MCF 10A (cell line): ENCODE measurements at regions of chr4 and their contacts with region 1.

Region 1: GRCh38 chr4:9704551-9705332 is 76.7 kb upstream of the DRD5 start:
- DNase-seq: peak; percentile 16
- H3K4me3 Mint-ChIP-seq: no peak overlapping the region
- H3K27ac Mint-ChIP-seq: no peak overlapping the region
- H3K4me1 Mint-ChIP-seq: peaks cover 12% of the 10 kb centered on the region
- H3K27me3 Mint-ChIP-seq: no peaks in the 10 kb centered on the region
- CTCF ChIP-seq: no peak

Region 2: GRCh38 chr4:9384126-9384525 is 320.6 kb before region 1 on chr4:
- CTCF ChIA-PET with region 1: no interaction called
- POLR2A ChIA-PET with region 1: no interaction called
- intact Hi-C with region 1: no loop called
- DNase-seq: peak; percentile 10
- H3K4me3 Mint-ChIP-seq: no peak overlapping the region
- H3K27ac Mint-ChIP-seq: no peak overlapping the region
- H3K4me1 Mint-ChIP-seq: no peaks in the 10 kb centered on the region
- H3K27me3 Mint-ChIP-seq: no peaks in the 10 kb centered on the region
- CTCF ChIP-seq: no peak

Region 3: GRCh38 chr4:9691238-9692065 is 13.3 kb before region 1 on chr4:
- CTCF ChIA-PET with region 1: interaction called, 13 read pairs
- POLR2A ChIA-PET with region 1: no interaction called
- intact Hi-C with region 1: no loop called
- DNase-seq: peak; percentile 93
- H3K4me3 Mint-ChIP-seq: peak overlapping the region; percentile 79
- H3K27ac Mint-ChIP-seq: peak overlapping the region; percentile 81
- H3K4me1 Mint-ChIP-seq: no peaks in the 10 kb centered on the region
- H3K27me3 Mint-ChIP-seq: no peaks in the 10 kb centered on the region
- CTCF ChIP-seq: no peak

Region 4: DNA sequence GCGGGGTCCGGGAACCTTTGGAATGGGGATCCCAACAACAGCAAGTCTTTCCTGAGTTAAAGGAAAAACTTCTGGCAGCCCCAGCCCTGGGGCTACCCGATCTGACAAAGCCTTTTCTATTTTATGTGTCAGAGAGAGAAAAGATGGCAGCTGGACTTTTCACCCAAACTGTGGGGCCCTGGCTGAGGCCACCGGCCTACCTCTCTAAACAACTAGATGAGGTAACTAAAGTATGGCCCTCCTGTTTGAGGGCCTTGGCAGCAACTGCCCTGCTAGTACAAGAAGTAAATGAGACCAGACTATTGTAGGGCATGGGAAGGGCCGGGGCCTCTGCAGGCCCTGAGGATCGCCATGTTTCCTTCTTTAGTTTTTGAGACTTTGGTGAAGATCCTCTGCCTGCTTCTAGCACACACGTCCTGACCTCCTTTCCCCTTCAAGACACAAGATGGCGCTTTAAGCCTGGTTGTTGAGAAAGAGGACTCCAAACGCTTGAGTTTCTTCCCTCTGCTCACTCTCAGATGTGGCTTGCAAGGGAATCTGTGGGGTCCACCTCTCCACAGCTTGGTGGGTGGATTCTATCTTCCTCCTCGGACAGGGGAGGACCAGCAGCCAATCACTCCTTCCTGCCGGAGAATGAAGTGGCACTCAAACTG is 58.2 kb after region 1 on chr4:
- CTCF ChIA-PET with region 1: no interaction called
- POLR2A ChIA-PET with region 1: no interaction called
- intact Hi-C with region 1: loop called (anchors 1 kb)
- DNase-seq: peak; percentile 81
- H3K4me3 Mint-ChIP-seq: no peak overlapping the region
- H3K27ac Mint-ChIP-seq: no peak overlapping the region
- H3K4me1 Mint-ChIP-seq: peaks cover 5% of the 10 kb centered on the region
- H3K27me3 Mint-ChIP-seq: peaks cover 28% of the 10 kb centered on the region
- CTCF ChIP-seq: peak; percentile 74

Region 5: DNA sequence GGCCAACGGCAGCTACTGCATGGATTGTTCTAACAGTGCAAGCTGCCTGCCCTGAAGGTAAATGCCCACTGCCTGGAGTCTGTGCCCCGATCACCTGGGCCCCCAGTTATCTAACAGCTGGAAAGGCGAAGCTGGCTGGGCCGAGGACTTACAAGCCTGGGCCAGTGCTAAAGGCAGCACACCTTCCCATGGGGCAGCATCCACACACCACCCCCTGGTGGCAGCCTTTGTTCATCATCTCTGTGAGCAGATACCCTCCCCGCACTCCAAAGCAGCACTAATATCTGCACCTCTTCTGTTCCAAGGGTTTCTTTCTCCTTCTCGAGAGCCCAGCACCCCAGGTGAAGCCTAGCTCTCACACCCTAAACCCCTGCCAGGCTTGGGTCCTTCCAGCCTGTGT is 309.0 kb after region 1 on chr4:
- CTCF ChIA-PET with region 1: interaction called, 11 read pairs
- POLR2A ChIA-PET with region 1: no interaction called
- intact Hi-C with region 1: loop called (anchors 2 kb)
- DNase-seq: peak; percentile 59
- H3K4me3 Mint-ChIP-seq: no peak overlapping the region
- H3K27ac Mint-ChIP-seq: no peak overlapping the region
- H3K4me1 Mint-ChIP-seq: peaks cover 17% of the 10 kb centered on the region
- H3K27me3 Mint-ChIP-seq: no peaks in the 10 kb centered on the region
- CTCF ChIP-seq: peak; percentile 52

Region 6: DNA sequence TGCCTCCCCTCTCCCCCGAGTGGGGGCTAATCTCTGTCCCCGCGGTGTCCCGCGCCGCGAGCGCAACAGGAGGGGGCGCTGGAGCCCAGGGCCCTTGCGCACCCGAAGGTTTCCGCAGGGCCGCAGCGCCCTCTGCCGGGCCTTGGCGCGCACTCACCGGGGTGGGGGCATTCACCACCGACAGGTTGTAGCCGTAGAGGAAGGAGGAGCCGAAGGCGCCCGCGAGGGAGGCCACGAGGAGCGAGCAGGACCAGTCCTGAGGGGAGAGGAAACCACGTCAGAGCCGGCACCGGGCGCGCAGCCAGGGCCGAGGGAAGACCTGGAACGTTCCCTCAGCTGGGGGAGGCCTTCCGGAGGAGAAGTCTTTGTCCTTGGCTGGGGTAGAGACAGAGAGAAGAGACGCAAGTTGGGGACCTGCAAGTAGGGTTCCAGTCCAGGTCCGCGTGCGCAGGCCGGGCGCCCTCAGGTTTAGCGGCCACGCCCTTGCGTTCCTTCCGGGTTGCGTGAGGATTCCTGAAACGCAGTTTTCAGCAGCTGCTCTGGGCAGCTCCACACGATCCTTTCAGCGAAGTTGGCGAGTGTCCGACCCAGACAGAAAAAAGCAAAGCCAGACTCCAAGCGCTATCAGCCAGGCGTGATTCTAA is 314.2 kb after region 1 on chr4:
- CTCF ChIA-PET with region 1: interaction called, 11 read pairs
- POLR2A ChIA-PET with region 1: no interaction called
- intact Hi-C with region 1: loop called (anchors 2 kb)
- DNase-seq: peak; percentile 98
- H3K4me3 Mint-ChIP-seq: peak overlapping the region; percentile 80
- H3K27ac Mint-ChIP-seq: peak overlapping the region; percentile 97
- H3K4me1 Mint-ChIP-seq: peaks cover 48% of the 10 kb centered on the region
- H3K27me3 Mint-ChIP-seq: no peaks in the 10 kb centered on the region
- CTCF ChIP-seq: peak; percentile 99

Region 7: GRCh38 chr4:10063544-10064300 is 359.0 kb after region 1 on chr4:
- CTCF ChIA-PET with region 1: interaction called, 4 read pairs
- POLR2A ChIA-PET with region 1: no interaction called
- intact Hi-C with region 1: loop called (anchors 2 kb)
- DNase-seq: peak; percentile 80
- H3K4me3 Mint-ChIP-seq: no peak overlapping the region
- H3K27ac Mint-ChIP-seq: no peak overlapping the region
- H3K4me1 Mint-ChIP-seq: no peaks in the 10 kb centered on the region
- H3K27me3 Mint-ChIP-seq: no peaks in the 10 kb centered on the region
- CTCF ChIP-seq: peak; percentile 58